Activated CD4-positive, alpha-beta memory T cell treated with anti-CD3 and anti-CD28 coated beads for 36 hours (primary cell): ENCODE measurements at regions of chr14 and their contacts with region 1.

Region 1: GRCh38 chr14:71320107-71320733 is 413.0 kb downstream of the PCNX1 start:
- DNase-seq: peak; percentile 99
- H3K4me3 Mint-ChIP-seq: peak within 1 kb of the TSS; percentile 88
- H3K27ac Mint-ChIP-seq: peak within 1 kb of the TSS; percentile 85
- H3K4me1 Mint-ChIP-seq: peaks cover 37% of the 10 kb centered on the region
- H3K27me3 Mint-ChIP-seq: no peaks in the 10 kb centered on the region

Region 2: DNA sequence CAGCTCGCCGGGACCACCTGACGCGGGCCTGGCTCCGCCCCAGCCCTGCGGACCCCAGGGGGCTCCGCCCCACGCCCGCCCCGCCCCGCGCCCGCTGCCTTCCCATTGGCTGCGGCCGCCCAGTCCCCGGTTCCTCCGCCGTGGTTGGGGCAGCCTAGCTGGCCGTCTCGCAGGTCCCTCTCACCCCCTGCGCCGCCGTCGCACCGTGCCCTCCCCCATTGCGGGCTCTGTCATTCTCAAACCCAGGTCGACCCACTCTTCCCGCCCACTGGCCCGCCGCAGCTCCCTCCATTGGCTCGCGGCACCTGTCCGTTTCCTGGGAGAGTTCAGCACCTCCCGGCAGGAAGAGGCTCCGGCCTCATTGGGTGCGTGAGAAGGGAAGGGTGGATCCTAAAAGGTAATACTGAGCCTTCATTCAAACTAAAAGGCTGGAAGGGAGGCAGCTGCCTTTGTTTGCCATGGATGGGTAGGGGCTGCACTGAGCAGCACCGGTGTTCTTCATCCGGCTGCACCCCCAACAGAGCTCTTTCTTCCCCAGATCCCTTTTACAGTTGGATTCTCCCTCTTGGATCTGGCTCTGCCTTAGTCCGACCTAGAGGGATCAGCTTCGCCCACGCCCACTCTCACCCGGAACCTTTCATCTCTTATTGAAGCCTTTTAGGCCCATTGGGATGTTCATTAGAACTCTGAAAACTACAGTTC is 510.5 kb before region 1 on chr14:
- CTCF ChIA-PET with region 1: no interaction called
- POLR2A ChIA-PET with region 1: no interaction called
- intact Hi-C with region 1: loop called (anchors 1 kb)
- DNase-seq: peak; percentile 96
- H3K4me3 Mint-ChIP-seq: no peak overlapping the region
- H3K27ac Mint-ChIP-seq: no peak overlapping the region
- H3K4me1 Mint-ChIP-seq: peaks cover 6% of the 10 kb centered on the region
- H3K27me3 Mint-ChIP-seq: no peaks in the 10 kb centered on the region

Region 3: GRCh38 chr14:71117839-71118743 is 202.1 kb before region 1 on chr14:
- CTCF ChIA-PET with region 1: interaction called, 3 read pairs
- POLR2A ChIA-PET with region 1: no interaction called
- intact Hi-C with region 1: loop called (anchors 10 kb)
- DNase-seq: peak; percentile 23
- H3K4me3 Mint-ChIP-seq: no peak overlapping the region
- H3K27ac Mint-ChIP-seq: peak overlapping the region; percentile 85
- H3K4me1 Mint-ChIP-seq: peaks cover 24% of the 10 kb centered on the region
- H3K27me3 Mint-ChIP-seq: no peaks in the 10 kb centered on the region

Region 4: DNA sequence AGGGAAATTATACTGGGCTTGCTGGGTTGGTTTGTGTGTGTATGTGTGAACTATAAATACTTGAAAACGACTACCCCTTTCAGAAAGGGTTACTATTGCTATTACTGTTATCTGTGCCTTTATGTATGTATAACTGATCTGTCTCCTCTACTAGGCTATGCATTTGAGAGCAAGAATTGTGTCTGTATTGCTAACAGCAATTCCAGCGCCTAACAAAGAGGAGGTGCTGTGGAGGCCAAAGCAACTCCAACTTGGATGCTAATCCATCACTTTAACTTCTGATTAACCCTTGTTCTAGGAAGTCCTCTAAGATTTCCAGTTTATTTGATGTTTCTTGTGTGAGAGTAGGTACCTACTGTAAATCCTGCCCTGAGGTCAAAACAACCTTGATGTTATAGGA is 99.1 kb before region 1 on chr14:
- CTCF ChIA-PET with region 1: no interaction called
- POLR2A ChIA-PET with region 1: no interaction called
- intact Hi-C with region 1: loop called (anchors 1 kb)
- DNase-seq: no peak
- H3K4me3 Mint-ChIP-seq: no peak overlapping the region
- H3K27ac Mint-ChIP-seq: no peak overlapping the region
- H3K4me1 Mint-ChIP-seq: peaks cover 24% of the 10 kb centered on the region
- H3K27me3 Mint-ChIP-seq: no peaks in the 10 kb centered on the region

Region 5: DNA sequence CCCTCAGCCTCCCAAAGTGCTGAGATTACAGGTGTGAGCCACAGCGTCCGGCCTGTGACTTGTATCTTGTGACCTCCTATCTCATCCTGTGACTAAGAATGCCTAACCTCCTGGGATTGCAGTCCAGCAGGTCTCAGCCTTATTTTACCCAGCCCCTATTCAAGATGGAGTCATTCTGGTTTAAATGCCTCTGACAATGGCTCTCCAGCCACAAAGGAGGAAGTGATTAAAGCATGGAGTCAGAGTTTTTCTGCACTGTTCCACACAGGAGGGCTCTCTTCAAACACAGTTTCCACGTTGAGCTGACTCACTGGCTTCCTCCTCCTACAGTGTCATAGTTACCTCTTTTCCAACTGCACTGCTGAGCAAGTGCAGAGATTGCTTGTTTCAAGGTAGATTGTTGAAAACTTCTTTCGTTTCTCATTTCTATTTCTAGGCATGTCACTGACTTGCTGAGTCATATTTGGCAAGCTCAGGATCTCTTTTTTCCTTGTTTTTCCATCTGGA is 29.2 kb before region 1 on chr14:
- CTCF ChIA-PET with region 1: interaction called, 4 read pairs
- POLR2A ChIA-PET with region 1: interaction called, 6 read pairs
- intact Hi-C with region 1: loop called (anchors 1 kb)
- DNase-seq: peak; percentile 70
- H3K4me3 Mint-ChIP-seq: no peak overlapping the region
- H3K27ac Mint-ChIP-seq: peak overlapping the region; percentile 61
- H3K4me1 Mint-ChIP-seq: peaks cover 17% of the 10 kb centered on the region
- H3K27me3 Mint-ChIP-seq: no peaks in the 10 kb centered on the region

Region 6: DNA sequence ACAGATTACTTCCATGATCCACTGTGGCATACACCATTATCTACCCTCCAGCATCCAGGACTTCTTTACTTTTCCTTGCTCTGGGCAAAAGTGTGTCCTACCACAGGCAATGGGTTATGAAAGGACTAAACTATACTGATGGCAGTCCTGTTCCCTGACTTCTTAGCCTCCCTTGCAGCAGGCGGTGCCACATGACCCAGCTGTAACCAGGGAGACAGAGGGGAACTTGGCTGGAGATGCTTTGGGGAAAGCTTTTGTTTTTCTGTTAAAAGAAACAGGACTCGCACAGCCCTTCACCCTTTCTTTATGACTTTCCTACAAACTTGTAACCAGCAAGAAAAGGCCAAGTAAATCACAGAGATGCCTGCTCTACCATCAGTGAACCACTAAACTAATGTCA is 18.6 kb before region 1 on chr14:
- CTCF ChIA-PET with region 1: no interaction called
- POLR2A ChIA-PET with region 1: no interaction called
- intact Hi-C with region 1: no loop called
- DNase-seq: no peak
- H3K4me3 Mint-ChIP-seq: no peak overlapping the region
- H3K27ac Mint-ChIP-seq: no peak overlapping the region
- H3K4me1 Mint-ChIP-seq: peaks cover 5% of the 10 kb centered on the region
- H3K27me3 Mint-ChIP-seq: no peaks in the 10 kb centered on the region

Region 7: GRCh38 chr14:71403656-71404055 is 83.4 kb after region 1 on chr14:
- CTCF ChIA-PET with region 1: interaction called, 6 read pairs
- POLR2A ChIA-PET with region 1: interaction called, 6 read pairs
- intact Hi-C with region 1: loop called (anchors 1 kb)
- DNase-seq: peak; percentile 35
- H3K4me3 Mint-ChIP-seq: no peak overlapping the region
- H3K27ac Mint-ChIP-seq: no peak overlapping the region
- H3K4me1 Mint-ChIP-seq: peaks cover 35% of the 10 kb centered on the region
- H3K27me3 Mint-ChIP-seq: no peaks in the 10 kb centered on the region

Region 8: DNA sequence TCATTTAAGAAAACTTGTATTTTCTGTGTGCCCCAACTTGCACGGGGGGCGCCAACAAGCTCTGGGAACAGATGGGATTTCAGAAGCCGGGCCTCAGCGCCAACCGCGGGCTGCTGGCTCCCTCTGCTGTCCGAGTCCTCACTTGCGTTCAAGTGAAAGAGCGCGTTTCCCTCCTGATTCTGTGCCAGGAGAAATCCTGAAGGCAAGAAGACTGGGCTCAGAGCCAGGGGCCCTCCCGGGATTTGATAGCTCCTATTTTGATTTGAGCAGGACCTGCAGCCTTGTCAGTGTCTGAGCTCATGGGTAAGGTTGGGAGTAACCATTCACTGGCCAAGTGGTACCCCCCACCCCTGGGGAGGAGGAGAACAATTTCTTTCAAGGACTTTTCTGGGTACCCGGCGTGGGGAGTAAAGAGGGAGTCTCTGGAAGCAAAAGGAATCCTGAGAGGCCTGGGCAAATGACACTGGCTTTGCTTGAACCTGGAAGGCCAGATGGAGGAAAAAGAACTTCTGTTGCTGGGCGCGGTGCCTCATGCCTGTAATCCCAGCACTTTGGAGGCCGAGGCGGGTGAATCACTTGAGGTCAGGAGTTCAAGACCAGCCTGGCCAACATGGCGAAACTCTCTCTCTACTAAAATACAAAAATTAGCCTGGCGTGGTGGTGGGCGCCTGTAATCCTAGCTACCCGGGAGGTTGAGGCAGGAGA is 433.1 kb after region 1 on chr14:
- CTCF ChIA-PET with region 1: interaction called, 11 read pairs
- POLR2A ChIA-PET with region 1: no interaction called
- intact Hi-C with region 1: loop called (anchors 5 kb)
- DNase-seq: peak; percentile 79
- H3K4me3 Mint-ChIP-seq: no peak overlapping the region
- H3K27ac Mint-ChIP-seq: no peak overlapping the region
- H3K4me1 Mint-ChIP-seq: no peaks in the 10 kb centered on the region
- H3K27me3 Mint-ChIP-seq: peaks cover 3% of the 10 kb centered on the region